Ovary (tissue), 10 donors: ENCODE measurements at regions of chr11 and their contacts with region 1.

Region 1: DNA sequence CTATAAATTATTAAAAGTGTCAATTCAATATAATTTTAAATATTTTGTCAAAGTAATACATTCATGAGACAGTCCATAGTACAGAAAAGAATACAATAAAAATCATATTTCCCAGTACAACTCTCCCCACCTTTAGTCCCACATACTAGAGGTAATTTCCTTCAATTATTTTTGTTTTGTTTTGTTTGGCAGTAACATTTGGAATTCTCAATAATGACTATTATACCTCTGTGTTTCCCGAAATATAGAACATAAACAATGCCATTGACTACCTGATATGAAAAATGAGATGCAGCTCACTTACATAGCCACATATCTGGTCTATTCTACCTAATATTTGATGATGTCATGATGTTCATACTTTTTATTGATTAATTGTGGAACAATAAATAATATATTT is 24.4 kb upstream of the CASP4 start:
- DNase-seq: no peak
- H3K4me3 ChIP-seq: no peak overlapping the region
- H3K27ac ChIP-seq: no peak overlapping the region
- H3K4me1 ChIP-seq: no peaks in the 10 kb centered on the region
- H3K27me3 ChIP-seq: no peaks in the 10 kb centered on the region
- CTCF ChIP-seq: no peak
- EP300 ChIP-seq: no peak
- POLR2A ChIP-seq: no peak

Region 2: DNA sequence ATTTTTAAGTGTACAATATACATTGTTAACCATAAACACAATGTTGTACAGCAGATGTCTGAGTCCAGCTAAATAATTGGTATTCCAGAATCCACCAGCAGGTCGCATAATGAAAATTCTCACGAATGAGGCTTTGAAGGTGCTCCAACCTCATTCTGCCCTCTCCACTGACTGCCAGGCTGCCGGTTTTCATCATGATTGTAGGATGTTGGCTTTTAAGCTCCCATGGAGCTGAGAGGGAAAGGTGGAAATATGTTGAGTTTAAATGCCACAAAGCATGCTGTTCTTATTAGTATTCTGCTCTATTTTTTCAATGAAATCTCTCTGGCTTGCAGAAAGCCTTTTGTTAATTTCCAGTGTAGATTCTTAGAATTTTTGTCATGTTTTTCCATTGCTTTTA is 1293.6 kb before region 1 on chr11:
- intact Hi-C with region 1: loop called in 1 of 4 experiments (anchors 5 kb)
- DNase-seq: no peak
- H3K4me3 ChIP-seq: no peak overlapping the region
- H3K27ac ChIP-seq: no peak overlapping the region
- H3K4me1 ChIP-seq: no peaks in the 10 kb centered on the region
- H3K27me3 ChIP-seq: no peaks in the 10 kb centered on the region
- CTCF ChIP-seq: no peak
- EP300 ChIP-seq: no peak
- POLR2A ChIP-seq: no peak

Region 3: DNA sequence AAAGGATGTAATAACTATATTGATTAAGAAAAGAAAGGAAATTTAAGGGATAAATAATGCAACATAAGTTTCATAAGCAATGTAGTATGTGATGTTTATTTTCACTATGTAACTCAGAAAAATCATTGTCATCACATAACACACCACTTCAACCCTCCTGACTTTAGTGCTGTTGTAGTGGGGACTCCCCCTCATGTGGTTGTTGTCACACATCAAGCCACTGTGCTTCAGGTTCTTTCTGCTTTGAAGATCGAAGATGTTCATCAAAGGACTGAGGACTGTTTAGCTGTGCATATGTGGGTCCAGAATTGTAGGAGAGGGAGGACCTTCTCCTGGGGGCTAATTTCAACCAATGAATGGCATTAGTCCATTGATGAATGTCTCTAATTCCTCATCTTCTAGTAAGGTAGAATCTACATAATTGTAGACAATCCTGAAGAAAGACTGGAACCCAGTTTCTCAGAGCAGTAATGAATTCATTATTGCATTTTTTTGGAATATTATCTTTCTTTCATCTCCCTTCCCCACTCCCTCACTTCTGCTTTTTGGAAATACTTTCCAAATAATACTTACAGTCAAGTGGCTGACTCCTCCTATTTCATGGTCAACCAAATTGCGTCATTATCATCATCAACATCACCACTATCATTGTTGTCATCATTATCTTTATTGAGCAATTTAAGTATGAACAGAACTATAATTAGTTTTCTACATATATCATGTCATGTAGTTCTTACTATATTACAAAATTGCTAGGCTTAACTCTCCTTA is 62.1 kb after region 1 on chr11:
- intact Hi-C with region 1: no loop called
- DNase-seq: no peak
- H3K4me3 ChIP-seq: no peak overlapping the region
- H3K27ac ChIP-seq: no peak overlapping the region
- H3K4me1 ChIP-seq: no peaks in the 10 kb centered on the region
- H3K27me3 ChIP-seq: no peaks in the 10 kb centered on the region
- CTCF ChIP-seq: no peak
- EP300 ChIP-seq: no peak
- POLR2A ChIP-seq: no peak